ENCODE measurements at regions of chr20 and their contacts with region 1.

Region 1: DNA sequence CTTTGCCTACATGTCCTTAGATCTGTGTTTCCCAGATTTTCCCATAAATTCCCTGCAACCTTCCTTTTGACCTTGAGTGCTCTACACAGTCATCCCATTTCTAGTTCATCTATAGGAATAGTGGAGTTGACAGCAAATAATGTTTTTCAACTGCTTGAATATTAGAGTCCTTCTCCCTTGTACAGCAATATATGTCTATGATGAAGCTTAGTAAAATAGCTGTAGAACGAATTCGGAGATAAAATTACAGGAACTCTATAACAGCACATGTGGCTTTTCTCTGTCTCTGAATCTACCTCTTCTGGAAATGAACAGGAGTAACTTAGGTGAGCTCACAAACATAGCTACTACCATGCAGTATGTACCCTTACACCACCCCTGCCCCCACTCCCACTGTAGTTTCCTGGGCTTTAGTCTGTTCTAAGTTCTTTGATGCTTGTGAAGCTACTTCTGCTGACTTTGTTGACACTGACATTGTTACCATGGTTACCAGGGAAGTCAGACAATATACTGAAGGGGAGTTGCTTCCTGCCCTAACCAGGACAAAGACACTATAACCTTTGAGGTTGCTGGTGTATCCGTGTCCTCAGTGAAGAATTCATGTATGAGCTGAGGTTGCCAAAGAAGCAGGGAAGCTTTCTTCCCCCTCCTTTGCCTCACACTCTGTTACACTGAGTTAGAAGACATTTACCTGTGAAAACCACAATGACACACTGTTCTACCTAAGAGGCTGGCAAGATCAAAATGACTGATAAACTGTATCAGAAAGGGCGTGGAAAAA is 35.8 kb upstream of the SHLD1 start:
- DNase-seq: peak; percentile 55 to 97 (median 81)
- ATAC-seq: peak; percentile 89
- H3K4me3 ChIP-seq: peak overlapping the region in 1 of 2 experiments; percentile 15
- H3K4me3 Mint-ChIP-seq: peak overlapping the region; percentile 73
- H3K27ac ChIP-seq: peak overlapping the region; percentile 67 to 83
- H3K27ac Mint-ChIP-seq: peak overlapping the region; percentile 95
- H3K4me1 ChIP-seq: peaks cover 18% of the 10 kb centered on the region
- H3K4me1 Mint-ChIP-seq: peaks cover 35% of the 10 kb centered on the region
- H3K27me3 ChIP-seq: no peaks in the 10 kb centered on the region
- H3K27me3 Mint-ChIP-seq: no peaks in the 10 kb centered on the region
- CTCF ChIP-seq: no peak

Region 2: DNA sequence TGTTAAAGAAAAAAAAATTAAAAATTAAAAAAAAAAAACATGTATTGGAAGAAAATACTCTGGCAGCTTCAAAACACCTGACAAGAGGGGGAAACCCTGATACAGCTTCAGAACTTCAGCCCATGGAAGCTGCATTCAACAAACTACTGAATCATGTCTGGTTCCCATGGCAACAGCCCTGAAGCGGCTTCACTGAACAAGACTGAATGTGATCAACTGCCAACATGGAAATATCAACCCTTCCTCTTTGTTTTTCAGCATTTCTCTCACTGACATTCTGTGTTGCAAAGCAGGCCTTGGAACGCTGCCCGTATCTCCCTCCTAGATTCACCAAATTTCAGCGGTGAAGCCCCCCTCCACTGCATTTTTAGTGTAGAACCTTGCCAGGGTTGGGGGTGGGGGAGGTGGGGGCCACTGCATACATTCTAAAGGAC is 55.5 kb before region 1 on chr20:
- CTCF ChIA-PET with region 1: no interaction called
- POLR2A ChIA-PET with region 1: interaction called, 4 read pairs
- intact Hi-C with region 1: loop called in 1 of 2 experiments (anchors 5 kb)
- DNase-seq: peak in 7 of 9 experiments; percentile 4 to 82 (median 54)
- ATAC-seq: peak; percentile 84
- H3K4me3 ChIP-seq: no peak overlapping the region
- H3K4me3 Mint-ChIP-seq: no peak overlapping the region
- H3K27ac ChIP-seq: no peak overlapping the region
- H3K27ac Mint-ChIP-seq: no peak overlapping the region
- H3K4me1 ChIP-seq: peaks cover 6% of the 10 kb centered on the region
- H3K4me1 Mint-ChIP-seq: peaks cover 10% of the 10 kb centered on the region
- H3K27me3 ChIP-seq: no peaks in the 10 kb centered on the region
- H3K27me3 Mint-ChIP-seq: no peaks in the 10 kb centered on the region
- CTCF ChIP-seq: no peak

Region 3: DNA sequence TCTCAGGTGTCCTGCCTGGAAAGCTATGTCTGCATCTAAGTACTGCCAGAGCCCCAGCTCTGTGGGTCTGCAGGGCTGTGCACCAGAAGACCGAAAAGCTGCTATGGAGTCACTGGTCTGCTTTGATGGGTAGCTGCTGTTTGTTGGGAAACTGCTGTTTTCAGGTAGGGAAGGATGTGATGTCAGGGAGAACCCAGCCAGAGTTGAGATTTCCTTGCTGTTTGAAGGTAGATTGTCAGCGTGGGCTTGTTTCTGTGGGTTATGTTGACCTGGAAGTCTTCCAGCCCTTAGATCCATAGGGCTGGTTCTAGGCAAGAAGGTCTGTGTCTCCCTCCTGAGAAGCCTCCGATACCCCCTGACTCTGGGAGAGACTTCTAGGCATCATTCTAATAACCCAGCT is 23.5 kb after region 1 on chr20:
- CTCF ChIA-PET with region 1: no interaction called
- POLR2A ChIA-PET with region 1: interaction called, 3 read pairs
- intact Hi-C with region 1: loop called (anchors 1 kb)
- DNase-seq: peak in 2 of 9 experiments; percentile 11 to 48
- ATAC-seq: no peak
- H3K4me3 ChIP-seq: no peak overlapping the region
- H3K4me3 Mint-ChIP-seq: peak overlapping the region; percentile 50
- H3K27ac ChIP-seq: peak overlapping the region; percentile 11 to 25
- H3K27ac Mint-ChIP-seq: peak overlapping the region; percentile 88
- H3K4me1 ChIP-seq: peaks cover 22% of the 10 kb centered on the region
- H3K4me1 Mint-ChIP-seq: peaks cover 25% of the 10 kb centered on the region
- H3K27me3 ChIP-seq: no peaks in the 10 kb centered on the region
- H3K27me3 Mint-ChIP-seq: no peaks in the 10 kb centered on the region
- CTCF ChIP-seq: no peak

Region 4: GRCh38 chr20:5749952-5750779 is 35.7 kb after region 1 on chr20 and contains the start of gene SHLD1:
- CTCF ChIA-PET with region 1: no interaction called
- POLR2A ChIA-PET with region 1: interaction called, 9 read pairs
- intact Hi-C with region 1: loop called (anchors 1 kb)
- DNase-seq: peak; percentile 55 to 92 (median 81)
- ATAC-seq: peak; percentile 98
- H3K4me3 ChIP-seq: peak within 1 kb of the TSS; percentile 69 to 86
- H3K4me3 Mint-ChIP-seq: peak within 1 kb of the TSS; percentile 96
- H3K27ac ChIP-seq: peak within 1 kb of the TSS; percentile 70 to 71
- H3K27ac Mint-ChIP-seq: peak within 1 kb of the TSS; percentile 96
- H3K4me1 ChIP-seq: peaks cover 24% of the 10 kb centered on the region
- H3K4me1 Mint-ChIP-seq: peaks cover 28% of the 10 kb centered on the region
- H3K27me3 ChIP-seq: no peaks in the 10 kb centered on the region
- H3K27me3 Mint-ChIP-seq: no peaks in the 10 kb centered on the region
- CTCF ChIP-seq: no peak
- total RNA-seq, gene SHLD1: 4.2 to 5.9 TPM

Region 5: DNA sequence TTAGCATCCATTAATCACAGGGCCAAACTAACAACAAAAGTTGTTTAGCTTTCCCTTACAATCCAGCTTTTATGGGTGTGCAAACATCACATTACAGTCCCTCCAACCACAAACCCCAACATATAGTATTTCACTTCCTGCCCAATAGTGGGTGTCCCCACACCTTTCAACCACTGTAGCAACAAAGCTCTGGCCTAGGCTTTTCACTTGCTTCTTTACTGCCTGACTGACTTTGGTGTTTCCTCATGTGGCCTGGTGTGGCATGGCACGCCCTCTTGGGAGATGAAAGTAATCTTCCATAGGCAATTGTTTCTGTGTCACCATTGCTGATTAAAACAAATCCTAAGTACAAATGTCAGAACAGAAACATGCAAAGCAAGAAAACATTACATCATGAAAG is 282.3 kb after region 1 on chr20:
- CTCF ChIA-PET with region 1: no interaction called
- POLR2A ChIA-PET with region 1: no interaction called
- intact Hi-C with region 1: no loop called
- DNase-seq: peak; percentile 7 to 88 (median 49)
- ATAC-seq: peak; percentile 95
- H3K4me3 ChIP-seq: no peak overlapping the region
- H3K4me3 Mint-ChIP-seq: peak overlapping the region; percentile 8
- H3K27ac ChIP-seq: peak overlapping the region in 1 of 2 experiments; percentile 37
- H3K27ac Mint-ChIP-seq: peak overlapping the region; percentile 75
- H3K4me1 ChIP-seq: peaks cover 18% of the 10 kb centered on the region
- H3K4me1 Mint-ChIP-seq: peaks cover 35% of the 10 kb centered on the region
- H3K27me3 ChIP-seq: no peaks in the 10 kb centered on the region
- H3K27me3 Mint-ChIP-seq: no peaks in the 10 kb centered on the region
- CTCF ChIP-seq: no peak

Measured in CD8-positive, alpha-beta T cell (primary cell).